ENCODE measurements at regions of chr2 and their contacts with region 1.

Region 1: GRCh38 chr2:65382776-65383357 is 49.5 kb downstream of the SPRED2 start:
- DNase-seq: peak; percentile 89
- H3K4me3 Mint-ChIP-seq: peak overlapping the region; percentile 42
- H3K27ac Mint-ChIP-seq: peak overlapping the region; percentile 68
- H3K4me1 Mint-ChIP-seq: peaks cover 40% of the 10 kb centered on the region
- H3K27me3 Mint-ChIP-seq: peaks cover 8% of the 10 kb centered on the region

Region 2: DNA sequence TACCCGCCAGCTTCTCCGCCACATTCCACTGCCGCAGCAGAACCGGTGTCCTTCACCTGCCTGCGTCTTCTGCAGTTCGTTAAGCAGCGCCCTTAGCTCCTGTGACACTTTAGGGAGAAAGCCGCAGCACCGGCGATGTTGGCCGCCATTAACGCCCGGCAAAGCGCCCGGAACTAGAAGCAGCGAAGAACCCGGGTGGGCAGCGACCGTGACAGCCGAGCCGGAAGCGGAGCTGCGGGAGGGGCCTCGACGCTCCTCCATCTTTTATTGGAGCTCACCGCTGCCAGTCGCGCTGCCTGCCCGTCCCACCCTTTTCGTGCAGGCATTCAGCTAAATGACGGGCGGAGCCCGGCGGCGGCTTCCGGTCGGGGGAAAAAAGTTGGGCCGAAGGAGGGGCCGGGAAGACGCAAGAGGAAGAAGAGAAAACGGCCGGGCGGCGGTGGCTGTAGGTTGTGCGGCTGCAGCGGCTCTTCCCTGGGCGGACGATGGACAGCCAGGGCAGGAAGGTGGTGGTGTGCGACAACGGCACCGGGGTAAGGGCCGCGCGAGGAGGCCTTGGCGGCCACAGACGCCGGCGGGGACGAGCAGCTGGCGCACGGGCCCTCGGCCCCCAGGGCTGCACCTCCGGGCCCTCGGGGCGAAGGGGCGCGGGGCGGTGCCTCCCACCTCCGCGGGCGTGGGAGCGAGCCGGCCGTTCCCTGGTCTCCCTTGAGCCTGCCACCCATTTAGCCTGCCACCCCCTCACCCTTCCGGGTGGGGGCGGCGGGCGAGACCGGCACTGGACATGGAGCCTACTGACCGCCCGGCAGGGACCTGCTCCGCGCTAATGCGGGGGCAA is 155.2 kb before region 1 on chr2 and contains the start of gene ACTR2:
- intact Hi-C with region 1: loop called (anchors 2 kb)
- DNase-seq: peak; percentile 99
- H3K4me3 Mint-ChIP-seq: peak within 1 kb of the TSS; percentile 97
- H3K27ac Mint-ChIP-seq: peak within 1 kb of the TSS; percentile 98
- H3K4me1 Mint-ChIP-seq: peaks cover 28% of the 10 kb centered on the region
- H3K27me3 Mint-ChIP-seq: peaks cover 1% of the 10 kb centered on the region
- total RNA-seq, gene ACTR2: 298 TPM in 2 replicates

Region 3: DNA sequence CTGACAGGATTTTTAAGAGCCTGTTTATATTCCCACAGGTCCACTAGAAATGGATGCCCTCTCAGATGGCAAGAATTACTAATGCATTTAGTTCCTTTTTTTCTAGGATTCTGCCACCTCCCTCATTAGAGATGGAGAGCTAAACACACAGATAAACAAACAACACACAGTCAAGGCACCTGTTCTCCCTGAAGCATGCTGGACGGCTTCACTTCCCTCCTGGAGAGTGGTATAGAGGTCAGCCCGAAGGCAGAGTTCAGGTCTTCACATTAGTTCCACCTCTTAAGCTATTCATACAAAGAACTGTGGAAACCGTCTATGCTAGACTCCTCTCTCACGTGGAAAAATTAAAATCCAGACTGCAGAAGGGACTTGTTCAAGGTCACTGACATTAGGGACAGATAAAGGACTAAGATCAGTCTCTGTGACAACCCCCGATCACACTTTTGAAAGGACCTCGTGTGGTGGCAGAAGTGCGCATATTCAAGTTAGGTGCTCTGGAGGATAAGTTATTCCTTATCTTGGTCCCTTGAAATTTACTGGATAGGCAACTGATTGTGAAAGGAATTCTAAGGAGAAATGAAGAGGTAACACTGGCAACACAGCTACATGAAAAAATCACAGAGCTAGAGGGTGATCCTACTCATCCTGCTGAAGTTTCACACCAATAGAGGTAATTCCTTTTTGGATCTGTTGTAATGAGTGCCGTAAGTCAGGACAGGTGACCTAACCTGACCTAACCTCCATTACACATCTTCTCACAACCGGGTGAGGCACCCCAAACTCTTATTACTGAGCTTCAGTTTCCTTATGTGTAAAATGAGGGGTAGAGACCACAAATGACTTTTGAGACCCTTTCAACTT is 25.5 kb before region 1 on chr2:
- intact Hi-C with region 1: loop called (anchors 1 kb)
- DNase-seq: no peak
- H3K4me3 Mint-ChIP-seq: peak overlapping the region; percentile 35
- H3K27ac Mint-ChIP-seq: peak overlapping the region; percentile 65
- H3K4me1 Mint-ChIP-seq: peaks cover 57% of the 10 kb centered on the region
- H3K27me3 Mint-ChIP-seq: peaks cover 8% of the 10 kb centered on the region

Region 4: GRCh38 chr2:65416945-65417344 is 34.1 kb after region 1 on chr2:
- intact Hi-C with region 1: loop called (anchors 5 kb)
- DNase-seq: no peak
- H3K4me3 Mint-ChIP-seq: peak overlapping the region; percentile 4
- H3K27ac Mint-ChIP-seq: peak overlapping the region; percentile 25
- H3K4me1 Mint-ChIP-seq: peaks cover 29% of the 10 kb centered on the region
- H3K27me3 Mint-ChIP-seq: no peaks in the 10 kb centered on the region

Region 5: DNA sequence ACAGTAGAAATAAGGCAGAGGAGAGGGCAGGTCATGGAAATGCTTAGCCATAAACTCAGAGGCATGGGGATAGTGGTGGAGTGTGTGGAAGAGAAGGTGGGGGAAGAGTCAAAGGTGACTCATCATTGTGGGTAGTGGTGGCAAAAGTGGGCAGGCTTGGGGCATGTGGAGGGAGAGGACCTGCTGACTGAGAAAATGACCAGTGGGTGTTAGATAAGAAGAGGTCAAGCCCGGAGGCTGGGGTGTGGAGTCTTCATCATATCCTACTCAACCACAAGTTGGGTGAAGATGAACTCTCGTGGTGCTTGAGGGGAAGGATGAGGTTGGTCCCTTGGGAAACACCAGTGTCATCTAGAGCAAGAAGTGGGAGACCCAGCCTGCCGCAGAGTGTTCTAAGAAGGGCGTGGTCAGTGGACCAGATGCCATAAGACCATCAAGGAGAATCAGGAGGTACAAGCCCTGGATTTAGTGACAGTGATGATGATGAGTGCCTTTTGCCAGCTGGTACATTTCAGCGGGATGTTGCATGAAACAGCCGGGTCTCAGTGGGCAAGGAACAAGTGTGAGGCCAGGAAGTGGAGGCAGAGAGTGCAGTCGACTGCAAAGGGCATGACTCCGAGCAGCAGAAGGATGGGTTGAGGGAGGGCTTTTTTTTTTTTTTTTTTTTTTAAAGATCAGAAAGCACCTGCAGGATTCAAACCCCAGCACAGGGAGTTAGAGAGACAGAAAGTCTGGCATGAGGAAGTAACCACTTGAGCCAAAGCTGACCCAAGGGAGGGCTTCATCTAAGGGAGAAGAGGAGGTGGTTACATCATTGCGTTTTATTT is 172.1 kb after region 1 on chr2:
- intact Hi-C with region 1: loop called (anchors 2 kb)
- DNase-seq: no peak
- H3K4me3 Mint-ChIP-seq: no peak overlapping the region
- H3K27ac Mint-ChIP-seq: peak overlapping the region; percentile 57
- H3K4me1 Mint-ChIP-seq: peaks cover 16% of the 10 kb centered on the region
- H3K27me3 Mint-ChIP-seq: peaks cover 30% of the 10 kb centered on the region

Measured in activated CD4-positive, alpha-beta T cell treated with anti-CD3 and anti-CD28 coated beads, Interleukin-2, amount 10 ng/mL, durations not matched to agents 24 days and 14 days (primary cell).